ENCODE measurements at regions of chr9 and their contacts with region 1.

Region 1: GRCh38 chr9:22008736-22009562 is at the start of gene CDKN2B:
- DNase-seq: peak; percentile 62
- H3K4me3 Mint-ChIP-seq: peak within 1 kb of the TSS; percentile 75
- H3K27ac Mint-ChIP-seq: no peak within 1 kb of the TSS
- H3K4me1 Mint-ChIP-seq: peaks cover 33% of the 10 kb centered on the region
- H3K27me3 Mint-ChIP-seq: peaks cover 71% of the 10 kb centered on the region
- total RNA-seq, gene CDKN2B: 0.65 to 0.87 TPM

Region 2: DNA sequence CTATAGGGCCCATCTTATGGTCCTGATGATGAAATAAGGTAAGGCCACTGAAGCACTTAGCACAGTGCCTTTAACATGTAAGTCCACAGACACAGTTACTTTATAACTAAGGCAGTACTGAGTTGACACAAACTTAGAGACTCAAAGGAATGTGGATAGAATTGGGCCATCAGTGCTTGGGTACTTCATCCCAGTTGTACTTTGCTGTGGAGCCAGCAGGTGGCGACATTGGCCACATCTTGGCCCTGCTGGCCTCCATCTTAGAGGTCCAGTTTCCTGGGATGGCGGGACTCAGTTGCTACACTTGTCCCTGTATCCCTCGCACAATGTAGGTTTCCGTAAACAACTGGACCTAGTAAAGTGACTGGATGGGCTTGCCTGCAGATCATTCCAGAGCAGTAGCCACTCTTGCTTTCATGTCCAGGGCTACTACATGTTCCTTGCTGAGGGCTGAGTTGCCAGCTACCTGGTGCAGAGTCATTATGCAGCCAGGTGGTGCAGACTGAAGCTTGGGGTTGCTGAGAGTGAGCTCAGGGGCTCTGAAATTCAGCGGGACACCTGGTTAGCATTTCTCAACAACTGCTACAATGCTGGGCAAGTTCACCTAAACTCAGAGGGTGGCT is 195.9 kb before region 1 on chr9:
- CTCF ChIA-PET with region 1: interaction called, 19 read pairs
- POLR2A ChIA-PET with region 1: no interaction called
- DNase-seq: peak; percentile 64
- H3K4me3 Mint-ChIP-seq: no peak overlapping the region
- H3K27ac Mint-ChIP-seq: no peak overlapping the region
- H3K4me1 Mint-ChIP-seq: peaks cover 17% of the 10 kb centered on the region
- H3K27me3 Mint-ChIP-seq: no peaks in the 10 kb centered on the region

Region 3: DNA sequence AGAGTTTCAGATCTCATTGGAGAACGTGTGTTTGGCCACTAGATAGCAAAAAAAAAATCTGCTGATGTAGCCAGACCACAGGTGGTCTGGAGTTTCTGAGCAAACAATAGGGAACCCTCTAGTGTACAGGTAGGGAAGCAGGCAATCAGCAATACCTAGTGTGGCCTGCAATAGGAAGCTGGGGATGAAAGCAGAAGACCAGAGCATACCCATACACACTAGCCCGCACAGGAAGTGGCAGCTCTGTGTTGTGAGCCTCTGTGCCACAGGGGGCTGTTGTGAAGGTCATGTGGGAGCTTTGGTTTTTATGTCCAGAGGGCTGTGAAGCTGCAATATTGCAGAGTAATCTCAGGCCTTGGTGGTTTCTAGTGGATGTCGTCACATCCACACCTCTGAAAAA is 125.3 kb before region 1 on chr9:
- CTCF ChIA-PET with region 1: no interaction called
- POLR2A ChIA-PET with region 1: no interaction called
- DNase-seq: no peak
- H3K4me3 Mint-ChIP-seq: no peak overlapping the region
- H3K27ac Mint-ChIP-seq: no peak overlapping the region
- H3K4me1 Mint-ChIP-seq: peaks cover 7% of the 10 kb centered on the region
- H3K27me3 Mint-ChIP-seq: no peaks in the 10 kb centered on the region

Region 4: GRCh38 chr9:21933865-21934264 is 75.1 kb before region 1 on chr9:
- CTCF ChIA-PET with region 1: no interaction called
- POLR2A ChIA-PET with region 1: no interaction called
- DNase-seq: no peak
- H3K4me3 Mint-ChIP-seq: no peak overlapping the region
- H3K27ac Mint-ChIP-seq: no peak overlapping the region
- H3K4me1 Mint-ChIP-seq: no peaks in the 10 kb centered on the region
- H3K27me3 Mint-ChIP-seq: no peaks in the 10 kb centered on the region

Region 5: GRCh38 chr9:21974548-21975409 is 34.2 kb before region 1 on chr9:
- CTCF ChIA-PET with region 1: interaction called, 19 read pairs
- POLR2A ChIA-PET with region 1: no interaction called
- DNase-seq: peak; percentile 40
- H3K4me3 Mint-ChIP-seq: peak overlapping the region; percentile 66
- H3K27ac Mint-ChIP-seq: peak overlapping the region; percentile 58
- H3K4me1 Mint-ChIP-seq: peaks cover 23% of the 10 kb centered on the region
- H3K27me3 Mint-ChIP-seq: peaks cover 92% of the 10 kb centered on the region

Region 6: GRCh38 chr9:21985964-21986667 is 22.8 kb before region 1 on chr9:
- CTCF ChIA-PET with region 1: interaction called, 14 read pairs
- POLR2A ChIA-PET with region 1: no interaction called
- DNase-seq: no peak
- H3K4me3 Mint-ChIP-seq: no peak overlapping the region
- H3K27ac Mint-ChIP-seq: no peak overlapping the region
- H3K4me1 Mint-ChIP-seq: peaks cover 12% of the 10 kb centered on the region
- H3K27me3 Mint-ChIP-seq: peaks cover 80% of the 10 kb centered on the region

Region 7: DNA sequence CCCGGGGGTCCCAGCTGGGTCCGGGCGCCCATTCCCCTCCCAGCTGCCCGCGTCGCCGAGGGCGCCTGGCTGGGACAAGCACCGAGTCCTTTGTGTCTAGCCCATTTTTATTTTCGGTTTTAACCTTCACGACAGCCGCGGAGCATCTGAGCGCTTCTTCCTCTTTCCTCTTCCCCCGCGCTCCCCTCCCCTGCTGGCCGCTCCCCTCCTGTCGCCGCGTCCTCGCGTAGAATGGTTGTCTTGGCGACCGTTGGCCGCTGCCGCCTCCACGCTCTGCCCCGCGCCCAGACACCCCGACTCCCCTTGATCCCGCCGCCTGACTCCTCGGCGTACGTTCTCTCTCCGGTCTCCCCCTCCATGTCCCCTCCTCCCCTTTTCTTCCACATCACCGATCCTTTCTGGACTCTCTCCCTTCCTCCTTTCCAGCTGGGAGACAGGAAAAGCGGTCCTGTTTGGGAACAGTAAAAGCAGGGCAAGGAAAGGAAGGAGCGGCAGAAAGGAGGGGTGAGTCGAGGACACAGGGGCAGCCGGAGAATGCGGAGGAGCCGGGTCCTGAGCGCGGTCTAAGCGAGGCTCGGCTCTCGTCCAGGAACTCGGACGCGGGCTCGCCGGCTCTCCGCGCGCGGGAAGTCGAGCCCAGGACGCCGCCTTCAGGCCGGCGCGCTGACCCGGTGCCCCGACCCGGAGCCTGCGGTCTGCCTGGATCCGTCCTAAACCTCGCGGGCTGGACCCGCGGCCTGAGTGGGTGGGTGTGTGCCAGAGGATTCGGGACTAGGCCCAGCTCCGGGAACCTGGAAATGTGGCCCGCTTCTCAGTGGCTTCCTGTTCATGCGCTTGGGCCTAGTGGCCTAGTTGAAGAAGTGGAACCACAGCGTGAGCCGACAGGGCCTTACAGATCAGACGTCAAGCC is 13.5 kb before region 1 on chr9:
- CTCF ChIA-PET with region 1: interaction called, 24 read pairs
- POLR2A ChIA-PET with region 1: no interaction called
- DNase-seq: peak; percentile 87
- H3K4me3 Mint-ChIP-seq: peak overlapping the region; percentile 97
- H3K27ac Mint-ChIP-seq: peak overlapping the region; percentile 99
- H3K4me1 Mint-ChIP-seq: peaks cover 25% of the 10 kb centered on the region
- H3K27me3 Mint-ChIP-seq: peaks cover 53% of the 10 kb centered on the region

Region 8: GRCh38 chr9:22119537-22120158 is 110.7 kb after region 1 on chr9:
- CTCF ChIA-PET with region 1: interaction called, 16 read pairs
- POLR2A ChIA-PET with region 1: no interaction called
- DNase-seq: peak; percentile 36
- H3K4me3 Mint-ChIP-seq: no peak overlapping the region
- H3K27ac Mint-ChIP-seq: no peak overlapping the region
- H3K4me1 Mint-ChIP-seq: peaks cover 18% of the 10 kb centered on the region
- H3K27me3 Mint-ChIP-seq: peaks cover 69% of the 10 kb centered on the region

Measured in activated CD4-positive, alpha-beta T cell treated with anti-CD3 and anti-CD28 coated beads, Interleukin-2, amount 10 ng/mL, durations not matched to agents 7 days and 5 days (primary cell).